Dendritic cell treated with granulocyte-macrophage colony-stimulating factor and Interleukin-4, amounts not matched to agents 40 ng/mL and 50 ng/mL, for 4 days (primary cell): ENCODE measurements at regions of chr17 and their contacts with region 1.

Region 1: DNA sequence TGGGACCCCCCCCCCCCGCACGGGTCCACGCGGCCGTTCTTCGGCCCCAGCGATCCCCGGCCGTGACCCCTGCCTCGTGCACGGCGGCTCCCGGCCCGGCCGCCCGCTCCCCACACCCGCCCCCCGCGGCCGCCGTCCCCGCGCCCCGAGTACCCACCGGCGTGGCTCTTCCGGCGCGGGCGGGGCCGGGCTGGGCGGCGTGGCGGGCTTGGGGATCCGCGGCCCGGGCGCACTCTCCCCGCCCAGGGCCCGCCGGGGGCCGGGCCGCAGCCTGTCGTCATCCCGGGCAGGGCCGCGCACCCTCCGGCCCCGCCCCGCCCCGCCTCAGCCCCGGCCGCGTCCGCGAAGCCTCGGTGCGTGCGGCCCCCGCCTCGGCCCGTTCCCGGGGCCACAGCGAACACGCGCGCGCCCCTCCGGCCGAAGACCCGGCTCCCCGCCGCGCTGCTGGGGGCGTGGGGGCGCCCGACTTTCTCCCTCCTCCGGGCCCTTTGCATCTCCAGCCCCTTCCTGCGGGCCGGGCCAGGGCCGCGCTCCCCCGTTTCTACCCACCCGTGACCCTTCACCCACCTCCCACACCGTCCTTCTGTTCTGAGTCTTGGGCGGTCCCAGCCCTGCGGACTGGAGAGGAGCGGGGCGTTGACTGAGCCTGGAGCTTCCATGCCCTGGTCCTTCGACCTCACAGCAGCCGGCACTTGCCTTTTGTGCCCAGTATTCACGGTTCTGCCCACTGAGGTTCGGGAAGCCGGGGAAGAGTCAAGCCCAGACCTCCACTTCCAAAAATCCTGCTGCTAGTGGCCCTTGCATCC is 840 bp downstream of the MYO1C start:
- H3K4me3 Mint-ChIP-seq: peak overlapping the region; percentile 90
- H3K27ac Mint-ChIP-seq: peak overlapping the region; percentile 86
- H3K4me1 Mint-ChIP-seq: peaks cover 67% of the 10 kb centered on the region
- H3K27me3 Mint-ChIP-seq: peaks cover 12% of the 10 kb centered on the region

Region 2: GRCh38 chr17:1312261-1312870 is 179.3 kb before region 1 on chr17:
- intact Hi-C with region 1: no loop called
- H3K4me3 Mint-ChIP-seq: no peak overlapping the region
- H3K27ac Mint-ChIP-seq: no peak overlapping the region
- H3K4me1 Mint-ChIP-seq: no peaks in the 10 kb centered on the region
- H3K27me3 Mint-ChIP-seq: peaks cover 38% of the 10 kb centered on the region

Region 3: GRCh38 chr17:1455797-1456599 is 35.6 kb before region 1 on chr17 and contains the start of gene CRK:
- intact Hi-C with region 1: loop called (anchors 2 kb)
- H3K4me3 Mint-ChIP-seq: peak within 1 kb of the TSS; percentile 87
- H3K27ac Mint-ChIP-seq: peak within 1 kb of the TSS; percentile 86
- H3K4me1 Mint-ChIP-seq: peaks cover 62% of the 10 kb centered on the region
- H3K27me3 Mint-ChIP-seq: peaks cover 25% of the 10 kb centered on the region